SK-N-SH (cell line): ENCODE measurements at regions of chr1 and their contacts with region 1.

Region 1: GRCh38 chr1:153352523-153352922 is 3.9 kb upstream of the PGLYRP4 start:
- DNase-seq: peak; percentile 77
- H3K4me3 ChIP-seq: no peak overlapping the region; a peak in 1 of 4 replicates
- H3K27ac ChIP-seq: no peak overlapping the region
- H3K4me1 ChIP-seq: no peaks in the 10 kb centered on the region
- H3K27me3 ChIP-seq: peaks cover 64% of the 10 kb centered on the region; the same call in 1 of the 2 replicates
- CTCF ChIP-seq: peak; percentile 93
- EP300 ChIP-seq: no peak
- RAD21 ChIP-seq: peak; percentile 92

Region 2: GRCh38 chr1:153231363-153231762 is 121.2 kb before region 1 on chr1:
- CTCF ChIA-PET with region 1: no interaction called
- POLR2A ChIA-PET with region 1: no interaction called
- DNase-seq: no peak
- H3K4me3 ChIP-seq: no peak overlapping the region
- H3K27ac ChIP-seq: no peak overlapping the region
- H3K4me1 ChIP-seq: no peaks in the 10 kb centered on the region
- H3K27me3 ChIP-seq: peaks cover 5% of the 10 kb centered on the region; the same call in 1 of the 2 replicates
- CTCF ChIP-seq: no peak
- EP300 ChIP-seq: no peak
- RAD21 ChIP-seq: no peak

Region 3: GRCh38 chr1:153365303-153366095 is 13.0 kb after region 1 on chr1:
- CTCF ChIA-PET with region 1: interaction called, 11 read pairs
- POLR2A ChIA-PET with region 1: no interaction called
- DNase-seq: no peak
- H3K4me3 ChIP-seq: no peak overlapping the region
- H3K27ac ChIP-seq: no peak overlapping the region
- H3K4me1 ChIP-seq: no peaks in the 10 kb centered on the region
- H3K27me3 ChIP-seq: peaks cover 31% of the 10 kb centered on the region; the same call in 1 of the 2 replicates
- CTCF ChIP-seq: no peak
- EP300 ChIP-seq: no peak
- RAD21 ChIP-seq: no peak